ENCODE measurements at regions of chr6 and their contacts with region 1.

Region 1: DNA sequence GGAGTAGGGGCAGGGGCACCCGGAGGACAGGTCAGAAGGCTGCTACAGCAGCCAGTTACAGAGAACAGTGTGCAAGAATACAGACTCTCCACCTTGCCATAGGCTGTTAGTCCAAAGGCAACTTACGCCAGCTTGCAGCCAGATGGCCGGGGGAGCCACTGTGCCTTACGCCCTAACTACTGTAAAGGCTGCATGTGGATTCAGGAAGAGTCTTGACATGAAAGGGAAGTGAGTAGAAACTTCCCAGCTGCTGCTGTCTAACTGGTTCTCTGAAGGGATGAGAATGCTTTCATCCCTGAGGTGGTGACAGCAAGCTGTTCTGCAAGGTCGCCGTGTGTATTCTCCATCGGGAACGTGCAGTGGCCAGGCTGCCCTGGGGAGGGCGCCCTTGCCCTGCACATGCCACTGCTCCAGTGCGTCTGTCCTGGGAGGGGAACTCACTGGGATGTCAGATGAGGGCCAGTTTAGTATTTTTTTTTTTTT is 46.1 kb downstream of the LYRM4 start:
- DNase-seq: peak in 2 of 9 donors; percentile 5 to 32
- ATAC-seq: no peak
- H3K4me3 ChIP-seq: no peak overlapping the region
- H3K4me3 Mint-ChIP-seq: no peak overlapping the region
- H3K27ac ChIP-seq: no peak overlapping the region
- H3K27ac Mint-ChIP-seq: no peak overlapping the region
- H3K4me1 ChIP-seq: no peaks in the 10 kb centered on the region
- H3K4me1 Mint-ChIP-seq: peaks cover 0 to 5% (median 0%) of the 10 kb centered on the region in 7 donors
- H3K27me3 ChIP-seq: no peaks in the 10 kb centered on the region
- H3K27me3 Mint-ChIP-seq: no peaks in the 10 kb centered on the region

Region 2: DNA sequence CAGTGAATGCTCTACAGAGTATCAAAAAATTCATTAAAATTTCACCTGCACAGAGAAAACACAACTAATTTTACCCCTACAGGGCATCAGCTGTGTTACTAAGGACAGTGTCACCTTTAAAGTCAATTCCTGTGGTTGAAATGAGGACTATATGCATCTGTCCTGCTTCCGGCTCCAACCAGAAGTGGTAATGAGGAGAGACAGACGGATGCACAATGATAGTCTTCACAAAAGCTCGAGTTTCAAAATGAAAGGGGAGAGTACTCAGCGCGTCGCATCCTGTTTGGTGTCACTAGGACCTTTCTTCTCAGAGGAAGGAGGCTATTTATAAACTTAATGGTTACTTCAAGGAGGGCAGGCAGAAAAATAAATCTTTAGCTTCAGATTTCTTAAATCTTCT is 40.4 kb before region 1 on chr6:
- CTCF ChIA-PET with region 1: no interaction called
- POLR2A ChIA-PET with region 1: no interaction called
- intact Hi-C with region 1: loop called in 1 of 2 experiments (anchors 5 kb)
- DNase-seq: peak in 8 of 9 donors; percentile 34 to 79 (median 71)
- ATAC-seq: peak; percentile 93
- H3K4me3 ChIP-seq: peak overlapping the region; percentile 46
- H3K4me3 Mint-ChIP-seq: peak overlapping the region; percentile 18 to 86 (median 78)
- H3K27ac ChIP-seq: peak overlapping the region; percentile 67
- H3K27ac Mint-ChIP-seq: peak overlapping the region; percentile 79 to 96 (median 92)
- H3K4me1 ChIP-seq: peaks cover 23 to 38% of the 10 kb centered on the region in 2 donors
- H3K4me1 Mint-ChIP-seq: peaks cover 31 to 75% (median 64%) of the 10 kb centered on the region in 7 donors
- H3K27me3 ChIP-seq: no peaks in the 10 kb centered on the region
- H3K27me3 Mint-ChIP-seq: no peaks in the 10 kb centered on the region

Region 3: DNA sequence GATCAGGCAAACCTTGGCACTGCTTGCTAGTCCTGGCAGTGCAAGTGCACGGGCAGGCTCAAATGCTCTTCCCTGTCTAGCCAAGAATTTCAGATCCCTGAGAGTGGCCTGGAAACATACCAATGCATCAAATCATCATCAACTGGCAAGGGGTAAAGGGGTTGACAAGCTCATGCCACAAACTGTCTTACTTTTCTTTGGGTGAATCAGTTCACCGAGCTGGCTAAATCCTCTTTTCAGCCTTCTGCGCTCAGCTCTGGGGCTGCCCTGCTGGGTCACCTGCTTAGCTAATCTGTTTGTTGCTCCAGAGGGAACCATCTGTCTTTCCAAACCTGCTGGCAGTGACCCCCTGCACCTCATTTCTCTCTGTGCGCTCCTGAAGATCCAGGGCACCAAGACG is 13.3 kb before region 1 on chr6:
- CTCF ChIA-PET with region 1: no interaction called
- POLR2A ChIA-PET with region 1: no interaction called
- intact Hi-C with region 1: no loop called
- DNase-seq: no peak
- ATAC-seq: no peak
- H3K4me3 ChIP-seq: no peak overlapping the region
- H3K4me3 Mint-ChIP-seq: no peak overlapping the region
- H3K27ac ChIP-seq: no peak overlapping the region
- H3K27ac Mint-ChIP-seq: no peak overlapping the region
- H3K4me1 ChIP-seq: no peaks in the 10 kb centered on the region
- H3K4me1 Mint-ChIP-seq: peaks cover 0 to 6% (median 3%) of the 10 kb centered on the region in 7 donors
- H3K27me3 ChIP-seq: no peaks in the 10 kb centered on the region
- H3K27me3 Mint-ChIP-seq: no peaks in the 10 kb centered on the region

Region 4: GRCh38 chr6:5302995-5303622 is 88.5 kb after region 1 on chr6:
- CTCF ChIA-PET with region 1: no interaction called
- POLR2A ChIA-PET with region 1: no interaction called
- intact Hi-C with region 1: loop called in 1 of 2 experiments (anchors 10 kb)
- DNase-seq: peak; percentile 8 to 53 (median 36)
- ATAC-seq: peak; percentile 90
- H3K4me3 ChIP-seq: peak overlapping the region; percentile 10
- H3K4me3 Mint-ChIP-seq: peak overlapping the region in 5 of 10 donors; percentile 3 to 36 (median 22)
- H3K27ac ChIP-seq: no peak overlapping the region
- H3K27ac Mint-ChIP-seq: peak overlapping the region in 5 of 9 donors; percentile 3 to 48 (median 15)
- H3K4me1 ChIP-seq: peaks cover 5 to 13% of the 10 kb centered on the region in 2 donors
- H3K4me1 Mint-ChIP-seq: peaks cover 20 to 58% (median 42%) of the 10 kb centered on the region in 7 donors
- H3K27me3 ChIP-seq: no peaks in the 10 kb centered on the region
- H3K27me3 Mint-ChIP-seq: no peaks in the 10 kb centered on the region

Region 5: DNA sequence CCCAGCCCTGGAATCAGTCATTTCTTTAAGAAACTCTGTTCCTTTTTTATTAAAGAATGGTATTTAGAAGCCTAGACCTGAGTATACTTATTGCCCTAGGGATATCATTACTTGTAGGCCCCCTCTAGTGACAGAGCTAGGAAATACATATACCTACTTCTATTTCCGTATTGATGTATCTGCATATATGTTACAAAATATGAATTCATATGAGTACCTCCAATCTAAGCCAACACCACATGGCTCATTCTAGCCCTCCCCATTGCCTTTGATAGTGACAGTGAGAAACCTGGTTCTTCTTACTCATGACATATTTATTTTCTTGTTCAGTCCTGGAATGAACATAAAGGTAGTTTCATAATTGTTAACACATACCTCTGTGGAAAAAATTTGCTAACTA is 183.9 kb after region 1 on chr6:
- CTCF ChIA-PET with region 1: no interaction called
- POLR2A ChIA-PET with region 1: no interaction called
- intact Hi-C with region 1: loop called in 1 of 2 experiments (anchors 10 kb)
- DNase-seq: peak in 6 of 9 donors; percentile 17 to 43 (median 33)
- ATAC-seq: peak; percentile 71
- H3K4me3 ChIP-seq: no peak overlapping the region
- H3K4me3 Mint-ChIP-seq: no peak overlapping the region
- H3K27ac ChIP-seq: no peak overlapping the region
- H3K27ac Mint-ChIP-seq: no peak overlapping the region
- H3K4me1 ChIP-seq: no peaks in the 10 kb centered on the region
- H3K4me1 Mint-ChIP-seq: peaks cover 3 to 18% (median 9%) of the 10 kb centered on the region in 7 donors
- H3K27me3 ChIP-seq: no peaks in the 10 kb centered on the region
- H3K27me3 Mint-ChIP-seq: no peaks in the 10 kb centered on the region